ENCODE measurements at regions of chr11 and their contacts with region 1.

Region 1: DNA sequence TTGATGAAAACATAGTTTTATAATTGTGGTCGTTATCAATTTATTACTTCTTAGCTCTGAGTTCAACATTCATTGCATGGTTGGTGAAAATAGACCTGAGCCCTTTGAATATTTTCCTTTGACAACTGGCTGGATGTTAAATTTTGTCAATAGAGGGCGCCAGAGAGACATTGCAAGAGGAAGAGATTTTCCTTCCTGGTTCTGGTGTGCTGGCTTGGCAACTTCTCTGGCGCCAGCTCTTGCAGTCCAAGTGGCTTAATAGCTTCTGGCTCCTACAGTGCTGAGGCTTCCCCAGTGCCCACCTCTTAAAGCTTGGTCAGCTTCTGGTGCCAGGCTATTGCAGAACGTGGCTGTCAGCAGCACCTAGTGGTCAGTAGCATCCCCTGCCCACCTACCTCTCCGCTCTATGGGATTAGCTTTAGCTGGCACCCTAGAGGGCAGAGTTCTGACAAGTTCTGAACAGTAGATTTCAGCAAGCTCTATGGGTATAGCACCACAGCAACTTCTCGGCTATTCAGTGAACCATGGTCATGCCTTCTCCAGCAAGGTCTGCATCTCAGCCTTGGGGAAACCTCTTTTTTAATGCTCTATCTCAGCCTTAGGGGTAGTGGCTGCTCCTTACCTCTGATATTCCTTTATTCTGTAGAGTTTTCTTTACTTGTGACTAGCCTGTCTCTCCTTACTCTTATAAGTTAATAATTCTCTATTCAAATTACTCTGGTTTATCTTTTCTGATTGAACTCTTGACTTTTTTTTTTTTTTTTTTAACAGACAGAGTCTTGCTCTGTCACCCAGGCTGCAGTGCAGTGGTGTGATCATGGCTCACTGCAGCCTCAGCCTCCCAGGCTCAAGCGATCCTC is 59.4 kb downstream of the ACER3 start:
- DNase-seq: peak; percentile 77
- H3K4me3 ChIP-seq: no peak overlapping the region
- H3K27ac ChIP-seq: no peak overlapping the region
- H3K4me1 ChIP-seq: peaks cover 7% of the 10 kb centered on the region
- H3K27me3 ChIP-seq: no peaks in the 10 kb centered on the region
- CTCF ChIP-seq: peak; percentile 70 to 77
- POLR2A ChIP-seq: no peak

Region 2: DNA sequence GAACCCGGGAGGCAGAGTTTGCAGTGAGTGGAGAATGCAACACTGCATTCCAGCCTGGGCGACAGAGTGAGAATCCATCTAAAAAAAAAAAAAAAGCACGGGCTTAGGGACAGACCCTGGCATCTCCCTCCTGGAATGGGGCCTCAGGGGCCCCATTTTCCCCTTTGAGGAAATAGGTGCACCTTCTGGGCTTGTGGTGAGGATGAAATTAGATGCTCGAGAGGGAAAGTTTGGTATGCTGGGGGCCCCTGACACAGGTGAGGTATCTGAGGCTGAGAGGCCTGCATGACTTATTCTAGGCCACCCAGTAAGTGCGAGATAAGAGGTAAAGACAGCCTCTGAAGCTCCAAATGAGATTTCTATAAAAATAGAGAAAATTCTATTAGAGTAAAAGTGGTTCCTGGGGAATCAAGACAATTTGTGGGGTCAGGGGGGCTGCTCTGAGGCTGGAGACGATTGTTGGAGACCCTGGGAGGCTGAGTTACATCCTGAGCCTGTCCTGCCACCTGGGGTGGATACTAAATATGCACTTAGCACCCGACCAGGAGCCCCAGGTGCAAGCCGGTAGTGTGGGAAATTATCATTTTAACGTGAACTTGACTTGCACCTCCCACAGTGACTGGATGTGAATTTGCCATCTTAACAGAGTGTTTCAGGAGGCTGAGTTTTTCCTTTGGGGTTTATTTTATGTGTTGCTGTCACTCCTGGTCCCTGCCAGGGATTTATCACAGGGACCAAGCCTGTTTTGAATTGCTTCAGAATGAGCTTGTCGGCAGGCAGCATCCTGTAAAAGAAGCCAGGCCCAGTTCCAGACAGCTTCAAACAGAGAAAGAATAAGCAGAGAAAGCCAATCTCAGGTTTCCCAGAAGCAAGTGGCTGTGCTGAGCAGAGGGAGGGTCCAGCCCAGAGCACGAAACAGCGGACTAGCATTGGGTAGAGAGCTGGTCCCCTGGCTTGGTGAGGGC is 185.4 kb before region 1 on chr11:
- CTCF ChIA-PET with region 1: interaction called, 88 read pairs
- POLR2A ChIA-PET with region 1: no interaction called
- dilution Hi-C with region 1: no loop called
- intact Hi-C with region 1: loop called (anchors 1 kb)
- DNase-seq: no peak
- H3K4me3 ChIP-seq: no peak overlapping the region
- H3K27ac ChIP-seq: no peak overlapping the region
- H3K4me1 ChIP-seq: peaks cover 5% of the 10 kb centered on the region
- H3K27me3 ChIP-seq: peaks cover 0 to 4% of the 10 kb centered on the region in 2 experiments
- CTCF ChIP-seq: no peak
- POLR2A ChIP-seq: no peak

Region 3: GRCh38 chr11:76835928-76836612 is 84.0 kb before region 1 on chr11:
- CTCF ChIA-PET with region 1: interaction called, 38 read pairs
- POLR2A ChIA-PET with region 1: no interaction called
- dilution Hi-C with region 1: no loop called
- intact Hi-C with region 1: loop called (anchors 1 kb)
- DNase-seq: peak; percentile 64
- H3K4me3 ChIP-seq: no peak overlapping the region
- H3K27ac ChIP-seq: no peak overlapping the region
- H3K4me1 ChIP-seq: peaks cover 33% of the 10 kb centered on the region
- H3K27me3 ChIP-seq: no peaks in the 10 kb centered on the region
- CTCF ChIP-seq: no peak
- POLR2A ChIP-seq: no peak

Region 4: DNA sequence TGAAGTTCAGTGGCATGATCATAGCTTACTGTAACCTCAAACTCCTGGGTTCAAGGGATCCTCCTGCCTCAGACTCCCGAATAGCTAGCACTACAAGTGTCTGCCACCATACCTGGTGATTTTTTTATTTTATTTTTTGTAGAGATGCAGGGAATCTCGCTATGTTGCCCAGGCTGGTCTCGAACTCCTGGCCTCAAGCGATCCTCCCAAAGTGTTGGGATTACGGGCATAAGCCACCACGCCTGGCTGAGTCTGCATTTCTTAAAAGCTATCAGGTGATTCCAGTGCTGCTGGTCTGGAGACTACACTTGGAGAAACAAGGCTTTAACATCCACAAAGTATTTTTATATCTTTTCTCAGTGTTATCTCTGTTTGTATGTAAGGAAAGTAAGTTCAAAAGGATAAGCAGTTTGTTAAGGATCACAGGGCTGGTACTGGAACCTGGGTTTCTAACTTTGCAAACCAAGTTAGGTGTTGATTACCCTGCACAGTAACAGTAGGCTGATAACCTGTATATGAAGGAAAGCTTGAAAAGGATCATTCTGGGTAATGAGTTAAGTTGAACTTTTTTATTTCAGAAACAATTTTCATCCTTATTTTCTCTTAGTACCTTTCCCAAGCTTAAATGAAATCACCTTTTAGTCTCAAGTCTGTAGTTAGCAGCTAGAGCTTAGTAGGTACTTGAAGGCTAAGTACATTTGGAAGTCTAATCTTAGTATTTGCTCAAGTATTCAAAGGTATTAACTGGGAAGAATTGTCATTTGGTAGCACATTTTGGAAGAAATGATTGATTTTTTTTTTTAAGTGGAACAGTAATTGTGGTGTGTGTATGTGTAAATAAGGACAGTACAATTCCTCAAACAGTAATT is 46.9 kb before region 1 on chr11:
- CTCF ChIA-PET with region 1: interaction called, 60 read pairs
- POLR2A ChIA-PET with region 1: no interaction called
- dilution Hi-C with region 1: no loop called
- intact Hi-C with region 1: no loop called
- DNase-seq: no peak
- H3K4me3 ChIP-seq: no peak overlapping the region
- H3K27ac ChIP-seq: no peak overlapping the region
- H3K4me1 ChIP-seq: peaks cover 8% of the 10 kb centered on the region
- H3K27me3 ChIP-seq: no peaks in the 10 kb centered on the region
- CTCF ChIP-seq: no peak
- POLR2A ChIP-seq: no peak

Region 5: GRCh38 chr11:76903329-76903728 is 16.8 kb before region 1 on chr11:
- CTCF ChIA-PET with region 1: interaction called, 76 read pairs
- POLR2A ChIA-PET with region 1: no interaction called
- dilution Hi-C with region 1: no loop called
- intact Hi-C with region 1: no loop called
- DNase-seq: no peak
- H3K4me3 ChIP-seq: no peak overlapping the region
- H3K27ac ChIP-seq: no peak overlapping the region
- H3K4me1 ChIP-seq: no peaks in the 10 kb centered on the region
- H3K27me3 ChIP-seq: no peaks in the 10 kb centered on the region
- CTCF ChIP-seq: no peak
- POLR2A ChIP-seq: no peak

Region 6: DNA sequence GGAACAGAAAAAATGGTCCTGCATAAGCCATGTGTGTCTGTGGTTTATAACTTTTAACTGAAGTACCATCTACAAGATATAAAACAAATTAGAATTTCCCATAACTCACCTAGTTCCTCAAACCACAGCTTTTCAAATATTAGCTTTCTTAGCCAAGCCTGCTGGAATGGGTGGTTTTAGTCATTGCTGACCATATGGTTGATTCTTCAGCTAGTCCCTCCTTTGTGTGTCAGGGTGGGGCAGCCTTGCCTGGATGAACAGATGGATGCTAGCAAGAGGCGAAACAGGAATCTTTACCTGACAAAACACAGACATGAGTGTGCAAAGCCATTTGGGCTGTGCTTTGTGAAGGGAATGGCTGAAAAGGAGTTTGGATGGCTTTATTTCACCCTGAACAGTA is 107.2 kb after region 1 on chr11:
- CTCF ChIA-PET with region 1: interaction called, 18 read pairs
- POLR2A ChIA-PET with region 1: no interaction called
- dilution Hi-C with region 1: no loop called
- intact Hi-C with region 1: no loop called
- DNase-seq: no peak
- H3K4me3 ChIP-seq: no peak overlapping the region
- H3K27ac ChIP-seq: no peak overlapping the region
- H3K4me1 ChIP-seq: no peaks in the 10 kb centered on the region
- H3K27me3 ChIP-seq: peaks cover 9 to 11% of the 10 kb centered on the region in 2 experiments
- CTCF ChIP-seq: no peak
- POLR2A ChIP-seq: no peak

Region 7: DNA sequence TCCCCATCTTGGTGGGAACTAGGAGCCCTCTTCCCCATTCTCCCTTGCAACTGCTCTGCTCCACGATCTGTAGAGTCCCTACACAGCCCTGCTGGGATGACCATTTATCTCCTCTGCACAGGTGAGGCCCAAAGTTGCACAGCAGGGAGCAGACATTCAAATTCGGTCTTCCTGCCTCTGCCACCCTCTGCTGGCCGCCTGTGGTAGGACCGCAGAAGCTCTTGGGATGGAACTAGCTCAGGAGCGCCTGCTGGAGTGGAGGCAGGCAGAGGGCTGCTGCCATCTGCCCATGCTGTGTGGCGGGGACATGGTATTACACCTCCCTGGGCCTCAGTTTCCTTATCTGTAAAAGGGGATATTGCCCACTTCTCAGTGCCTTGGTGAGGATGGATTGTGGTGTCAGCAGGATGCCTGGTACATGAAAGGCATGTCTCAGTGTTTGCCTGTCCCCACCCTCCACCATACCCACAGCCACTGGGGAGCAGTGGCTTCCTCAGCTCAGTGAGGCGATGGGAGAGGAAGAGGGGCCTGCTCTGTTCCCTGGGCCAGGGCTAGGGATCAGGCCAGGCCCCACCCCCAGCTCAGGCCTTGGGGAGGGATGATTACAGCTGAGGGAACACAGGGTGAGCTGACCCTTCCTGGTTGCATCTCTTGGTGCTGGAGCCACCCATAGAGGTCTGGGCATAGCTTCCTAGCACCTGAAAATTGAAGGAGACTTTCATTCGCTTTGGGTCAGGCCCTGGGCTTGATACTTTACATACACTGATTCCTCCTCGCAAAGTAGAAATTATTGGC is 171.2 kb after region 1 on chr11:
- CTCF ChIA-PET with region 1: interaction called, 16 read pairs
- POLR2A ChIA-PET with region 1: no interaction called
- dilution Hi-C with region 1: no loop called
- intact Hi-C with region 1: loop called (anchors 5 kb)
- DNase-seq: peak; percentile 73
- H3K4me3 ChIP-seq: no peak overlapping the region
- H3K27ac ChIP-seq: no peak overlapping the region
- H3K4me1 ChIP-seq: no peaks in the 10 kb centered on the region
- H3K27me3 ChIP-seq: no peaks in the 10 kb centered on the region
- CTCF ChIP-seq: peak; percentile 84 to 91
- POLR2A ChIP-seq: no peak